ENCODE measurements at regions of chr16 and their contacts with region 1.

Region 1: GRCh38 chr16:65489531-65490023 is 367.7 kb upstream of the CDH11 start:
- DNase-seq: no peak
- H3K4me3 ChIP-seq: no peak overlapping the region
- H3K27ac ChIP-seq: no peak overlapping the region
- H3K4me1 ChIP-seq: no peaks in the 10 kb centered on the region
- H3K27me3 ChIP-seq: peaks cover 0 to 4% (median 0%) of the 10 kb centered on the region in 5 experiments

Region 2: GRCh38 chr16:65449526-65449925 is 40.1 kb before region 1 on chr16:
- CTCF ChIA-PET with region 1: no interaction called
- POLR2A ChIA-PET with region 1: interaction called, 11 read pairs
- DNase-seq: no peak
- H3K4me3 ChIP-seq: no peak overlapping the region
- H3K27ac ChIP-seq: no peak overlapping the region
- H3K4me1 ChIP-seq: no peaks in the 10 kb centered on the region
- H3K27me3 ChIP-seq: peaks cover 0 to 2% (median 0%) of the 10 kb centered on the region in 5 experiments

Region 3: GRCh38 chr16:65500007-65500406 is 10.4 kb after region 1 on chr16:
- CTCF ChIA-PET with region 1: no interaction called
- POLR2A ChIA-PET with region 1: no interaction called
- DNase-seq: no peak
- H3K4me3 ChIP-seq: no peak overlapping the region
- H3K27ac ChIP-seq: no peak overlapping the region
- H3K4me1 ChIP-seq: no peaks in the 10 kb centered on the region
- H3K27me3 ChIP-seq: peaks cover 0 to 5% (median 2%) of the 10 kb centered on the region in 5 experiments